ENCODE measurements at regions of chrX and their contacts with region 1.

Region 1: GRCh38 chrX:101390664-101391525 is at the start of gene RPL36A:
- H3K4me3 ChIP-seq: peak within 1 kb of the TSS; percentile 57
- H3K27ac ChIP-seq: peak within 1 kb of the TSS; percentile 99
- H3K4me1 ChIP-seq: no peaks in the 10 kb centered on the region
- CTCF ChIP-seq: peak; percentile 97

Region 2: GRCh38 chrX:101348452-101349192 is 42.3 kb before region 1 on chrX and contains the start of gene TIMM8A:
- CTCF ChIA-PET with region 1: interaction called, 16 read pairs
- POLR2A ChIA-PET with region 1: interaction called, 105 read pairs
- H3K4me3 ChIP-seq: peak within 1 kb of the TSS; percentile 61
- H3K27ac ChIP-seq: peak within 1 kb of the TSS; percentile 80
- H3K4me1 ChIP-seq: peaks cover 10% of the 10 kb centered on the region; the same call in 1 of the 2 replicates
- CTCF ChIP-seq: peak; percentile 25; the same call in 1 of the 2 replicates

Region 3: GRCh38 chrX:101357199-101357795 is 33.6 kb before region 1 on chrX:
- CTCF ChIA-PET with region 1: interaction called, 17 read pairs
- POLR2A ChIA-PET with region 1: interaction called, 11 read pairs
- H3K4me3 ChIP-seq: no peak overlapping the region
- H3K27ac ChIP-seq: no peak overlapping the region
- H3K4me1 ChIP-seq: no peaks in the 10 kb centered on the region
- CTCF ChIP-seq: peak; percentile 43; the same call in 1 of the 2 replicates

Region 4: GRCh38 chrX:101368256-101368655 is 22.6 kb before region 1 on chrX:
- CTCF ChIA-PET with region 1: interaction called, 3 read pairs
- POLR2A ChIA-PET with region 1: interaction called, 15 read pairs
- H3K4me3 ChIP-seq: no peak overlapping the region
- H3K27ac ChIP-seq: no peak overlapping the region
- H3K4me1 ChIP-seq: peaks cover 2% of the 10 kb centered on the region; the same call in 1 of the 2 replicates
- CTCF ChIP-seq: no peak

Region 5: DNA sequence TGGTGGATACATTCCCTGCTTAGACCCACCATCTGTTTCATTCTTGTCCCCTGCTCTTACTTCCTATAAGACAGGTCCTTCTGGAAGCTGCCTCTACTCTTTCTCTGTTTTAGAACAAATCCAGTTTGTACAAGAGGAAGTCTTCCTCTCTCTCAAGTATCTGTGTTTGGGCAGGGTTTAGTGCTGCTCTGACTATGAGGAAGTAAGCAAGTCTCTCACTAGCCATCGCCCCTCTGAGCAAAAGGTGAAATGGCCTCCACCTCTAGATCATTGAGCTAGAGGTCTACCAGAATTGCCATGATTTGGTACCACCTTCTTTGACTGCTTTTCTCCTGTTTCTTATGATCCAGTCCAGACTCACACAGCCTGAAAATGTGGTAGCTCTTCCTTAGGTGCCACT is 13.3 kb before region 1 on chrX:
- CTCF ChIA-PET with region 1: interaction called, 16 read pairs
- POLR2A ChIA-PET with region 1: interaction called, 9 read pairs
- H3K4me3 ChIP-seq: no peak overlapping the region
- H3K27ac ChIP-seq: no peak overlapping the region
- H3K4me1 ChIP-seq: no peaks in the 10 kb centered on the region
- CTCF ChIP-seq: no peak

Region 6: GRCh38 chrX:101407748-101408531 is 17.0 kb after region 1 on chrX and contains the starts of genes GLA and HNRNPH2:
- CTCF ChIA-PET with region 1: interaction called, 10 read pairs
- POLR2A ChIA-PET with region 1: interaction called, 40 read pairs
- H3K4me3 ChIP-seq: peak within 1 kb of the TSS; percentile 47
- H3K27ac ChIP-seq: peak within 1 kb of the TSS; percentile 84
- H3K4me1 ChIP-seq: peaks cover 6% of the 10 kb centered on the region
- CTCF ChIP-seq: peak; percentile 59

Region 7: GRCh38 chrX:101462892-101463291 is 72.0 kb after region 1 on chrX:
- CTCF ChIA-PET with region 1: no interaction called
- POLR2A ChIA-PET with region 1: no interaction called
- H3K4me3 ChIP-seq: no peak overlapping the region
- H3K27ac ChIP-seq: no peak overlapping the region
- H3K4me1 ChIP-seq: no peaks in the 10 kb centered on the region
- CTCF ChIP-seq: no peak

Region 8: DNA sequence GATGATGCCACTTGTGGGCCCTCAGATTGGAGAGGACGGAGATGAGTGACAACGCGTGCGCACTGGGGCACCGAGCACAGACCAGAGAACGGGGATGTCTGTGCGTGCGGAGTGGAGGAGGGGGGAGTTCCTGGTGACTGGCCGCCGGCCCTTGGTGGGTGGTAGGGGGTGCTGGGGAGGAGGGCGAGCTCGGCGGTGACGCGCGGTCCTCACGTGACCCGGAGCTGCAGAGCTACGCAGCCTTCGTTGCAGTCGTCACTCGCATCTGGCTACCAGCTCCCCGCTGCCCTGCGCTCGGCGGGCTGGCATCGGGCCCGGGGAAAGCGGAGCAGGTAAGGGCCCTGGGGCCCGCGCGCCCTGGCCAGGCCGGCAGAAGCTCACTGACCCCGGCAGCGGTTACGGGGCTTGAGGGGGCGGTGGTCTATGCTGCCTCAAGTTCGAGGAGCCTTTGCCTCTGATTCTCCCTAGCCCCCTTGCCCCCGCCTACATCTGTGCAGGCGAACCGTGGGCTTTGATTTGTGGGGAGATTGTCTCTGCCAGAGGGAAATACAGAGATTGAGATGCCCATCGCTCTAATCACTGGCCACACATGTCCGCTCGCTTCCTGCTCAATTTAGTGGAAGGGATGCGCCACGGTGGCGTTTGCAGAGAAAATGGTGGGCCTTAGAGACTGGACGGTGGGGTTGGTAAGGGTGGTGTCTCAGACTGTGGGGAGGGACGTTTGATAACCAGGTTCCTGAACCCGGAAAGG is 94.5 kb after region 1 on chrX and contains the start of gene ARMCX4:
- CTCF ChIA-PET with region 1: no interaction called
- POLR2A ChIA-PET with region 1: no interaction called
- H3K4me3 ChIP-seq: no peak within 1 kb of the TSS
- H3K27ac ChIP-seq: no peak within 1 kb of the TSS
- H3K4me1 ChIP-seq: 0 out of 2 replicates have a peak, but pooled peaks cover 3% of the 10 kb centered on the region
- CTCF ChIP-seq: no peak

Region 9: GRCh38 chrX:101774340-101774739 is 383.4 kb after region 1 on chrX:
- CTCF ChIA-PET with region 1: no interaction called
- POLR2A ChIA-PET with region 1: no interaction called
- H3K4me3 ChIP-seq: no peak overlapping the region
- H3K27ac ChIP-seq: no peak overlapping the region
- H3K4me1 ChIP-seq: no peaks in the 10 kb centered on the region
- CTCF ChIP-seq: no peak